ENCODE measurements at regions of chr19 and their contacts with region 1.

Region 1: DNA sequence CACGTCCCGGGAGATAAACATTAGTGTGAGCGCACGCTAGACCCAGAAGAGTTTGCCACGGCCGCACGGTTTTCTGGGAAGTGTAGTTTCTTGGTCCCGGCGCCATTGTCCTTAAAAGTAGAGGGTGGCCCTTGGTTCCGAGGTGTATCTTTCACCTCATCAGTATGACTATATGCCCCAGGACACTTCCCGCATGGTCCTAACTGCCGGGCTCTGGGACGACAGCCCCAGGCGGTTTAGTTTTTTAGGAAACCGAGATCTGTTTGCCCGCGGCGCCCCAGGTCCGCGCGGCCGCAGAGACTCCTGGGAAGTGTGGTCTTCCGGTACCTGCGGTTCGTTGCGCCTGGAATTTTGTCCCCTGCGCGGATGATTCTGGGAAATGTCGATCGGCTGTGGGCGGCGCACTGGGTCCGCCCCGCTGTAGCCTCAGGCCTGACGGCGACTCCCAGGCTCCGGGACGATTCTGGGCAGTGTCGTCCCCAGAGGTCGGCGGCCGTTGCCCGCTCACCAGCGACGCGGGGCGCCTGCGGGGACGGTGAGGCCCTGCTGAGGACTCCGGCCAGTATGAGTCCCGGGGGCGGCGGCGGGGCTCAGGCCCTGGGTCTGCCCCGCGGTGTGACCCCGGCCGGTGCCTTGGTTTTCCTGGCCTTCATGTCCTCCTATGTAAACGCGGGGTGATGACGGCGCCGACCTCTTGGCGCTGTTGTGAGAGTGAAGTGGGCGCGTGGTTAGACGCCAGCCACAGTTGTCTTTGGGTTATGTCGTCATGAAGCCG is at the start of gene ZNF181:
- DNase-seq: peak; percentile 92
- ATAC-seq: peak; percentile 96
- total RNA-seq, gene ZNF181: 22.3 TPM

Region 2: GRCh38 chr19:34677386-34678084 is 56.5 kb before region 1 on chr19 and contains the start of gene ZNF302:
- intact Hi-C with region 1: loop called (anchors 2 kb)
- DNase-seq: peak; percentile 98
- ATAC-seq: peak; percentile 99
- total RNA-seq, gene ZNF302: 37.9 TPM

Region 3: DNA sequence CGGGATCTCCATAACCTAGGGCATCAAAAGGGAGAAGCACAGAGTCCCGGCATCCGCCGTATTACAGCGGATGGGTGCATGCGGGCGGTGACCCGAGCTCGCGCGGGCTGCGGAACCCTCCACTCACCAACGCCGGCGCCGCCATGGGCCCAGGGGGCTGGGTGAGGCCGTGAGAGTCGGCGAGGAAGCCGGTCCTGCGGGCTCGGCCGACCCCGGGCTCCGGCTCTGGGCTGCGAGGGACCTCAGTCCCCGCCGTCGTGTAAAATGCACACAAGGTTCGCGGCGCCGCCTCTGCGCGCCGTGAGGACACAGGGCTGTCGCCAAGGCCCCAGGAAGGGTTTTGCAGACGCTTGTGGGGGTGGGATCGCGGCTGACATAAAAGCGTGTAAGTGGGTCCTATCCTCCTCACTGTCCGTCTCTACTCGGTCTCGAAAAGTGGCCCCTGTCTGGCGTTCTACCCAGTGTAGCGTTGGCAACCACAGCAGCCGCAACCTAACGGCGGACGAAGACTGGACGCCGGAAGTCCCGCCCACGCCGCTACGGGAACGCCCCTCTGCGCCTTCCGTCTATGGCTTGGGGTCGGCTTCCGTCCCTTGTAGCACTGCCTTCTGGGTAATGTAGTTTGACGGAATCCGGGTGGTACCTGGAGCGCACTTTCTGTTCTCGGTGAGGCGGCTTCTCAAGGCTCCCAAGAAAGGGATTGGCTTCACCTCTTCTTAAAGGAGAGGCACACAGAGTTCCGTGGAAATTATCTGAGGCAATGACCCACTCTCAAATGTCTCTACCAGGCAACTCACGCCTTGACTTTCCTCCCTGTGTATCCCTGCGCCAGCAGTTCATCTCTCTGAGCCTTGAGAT is 38.9 kb after region 1 on chr19 and contains the start of gene ZNF599:
- intact Hi-C with region 1: loop called (anchors 1 kb)
- DNase-seq: peak; percentile 92
- ATAC-seq: peak; percentile 99
- total RNA-seq, gene ZNF599: 3.7 TPM

Region 4: GRCh38 chr19:34851353-34851752 is 117.3 kb after region 1 on chr19:
- intact Hi-C with region 1: no loop called
- DNase-seq: no peak
- ATAC-seq: no peak

Region 5: DNA sequence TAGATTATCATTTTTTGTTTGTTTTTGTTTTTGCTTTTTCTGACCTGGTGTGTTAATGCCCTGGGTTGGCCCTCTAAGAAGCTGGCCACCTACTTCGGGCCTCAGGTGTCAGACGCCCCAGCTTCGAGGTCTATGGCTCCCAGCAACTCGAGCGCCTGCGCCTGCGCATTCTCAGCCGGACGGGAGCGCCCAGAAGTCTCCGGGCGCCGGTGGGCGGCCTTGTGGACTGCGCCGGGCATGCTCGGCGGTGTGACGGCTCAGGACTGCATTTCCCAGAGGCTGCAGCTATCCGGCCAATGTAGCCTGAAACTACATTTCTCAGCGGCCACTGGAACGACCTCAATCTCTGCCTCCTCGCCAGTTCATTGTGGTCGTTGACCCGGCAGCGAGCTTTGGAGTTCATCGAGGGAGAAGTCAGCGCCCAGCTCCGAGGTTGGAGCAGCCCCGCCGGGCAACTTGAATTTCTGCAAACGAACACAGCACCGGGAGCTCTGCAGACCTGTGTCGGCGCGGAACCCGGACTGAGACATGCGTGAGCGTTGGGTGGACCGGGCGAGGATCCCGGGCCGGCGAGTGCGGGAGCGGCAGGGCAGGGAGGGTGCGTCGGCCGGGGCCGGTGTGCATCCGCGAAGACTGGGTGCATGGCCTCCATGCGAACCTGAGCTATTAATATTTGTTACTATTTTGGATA is 192.8 kb after region 1 on chr19 and contains the start of gene ZNF30:
- intact Hi-C with region 1: loop called (anchors 10 kb)
- DNase-seq: peak; percentile 96
- ATAC-seq: peak; percentile 100
- total RNA-seq, gene ZNF30: 2.6 TPM

Region 6: DNA sequence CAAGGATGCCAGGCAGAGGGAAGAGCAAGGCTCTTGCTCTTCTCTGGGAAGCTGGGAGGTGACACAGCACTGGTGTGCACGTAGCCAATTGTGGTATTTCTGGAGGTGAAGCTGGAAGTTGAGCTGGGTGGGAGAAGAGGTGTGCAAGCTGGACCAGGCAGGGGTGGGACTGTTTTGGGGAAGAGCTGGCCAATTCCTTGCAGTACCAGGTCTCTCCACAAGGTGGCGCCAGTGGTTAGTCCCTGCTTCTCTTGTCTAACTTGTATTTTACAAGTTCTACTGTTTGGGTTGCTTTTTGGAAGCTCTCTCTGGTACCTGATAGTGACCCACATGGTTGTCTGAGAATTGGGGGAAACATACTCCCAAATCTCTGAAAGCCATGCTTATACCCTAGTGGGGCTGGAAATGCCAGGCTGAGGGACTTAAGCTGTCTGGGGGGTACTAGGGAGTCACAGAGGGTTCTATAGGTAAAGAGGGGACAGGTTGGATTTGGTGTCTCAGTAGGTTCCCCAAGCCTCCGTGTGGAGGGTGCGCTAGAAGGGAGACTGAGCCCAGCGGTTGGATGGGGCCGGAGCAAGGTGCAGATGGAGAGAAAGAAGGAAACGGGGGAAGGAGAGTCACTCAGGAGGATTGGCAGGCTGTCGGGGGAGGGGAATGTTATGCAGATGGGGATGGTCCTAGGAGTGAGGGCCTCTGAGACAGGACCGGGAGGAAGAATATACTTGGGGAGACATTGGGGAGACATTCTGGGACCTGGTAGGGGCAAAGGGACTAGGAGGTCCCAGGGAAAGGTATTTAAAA is 310.5 kb after region 1 on chr19:
- intact Hi-C with region 1: loop called (anchors 10 kb)
- DNase-seq: no peak
- ATAC-seq: no peak